ENCODE measurements at regions of chr9 and their contacts with region 1.

Region 1: GRCh38 chr9:135253305-135254004 is 166.0 kb downstream of the OLFM1 start:
- DNase-seq: peak; percentile 68

Region 2: DNA sequence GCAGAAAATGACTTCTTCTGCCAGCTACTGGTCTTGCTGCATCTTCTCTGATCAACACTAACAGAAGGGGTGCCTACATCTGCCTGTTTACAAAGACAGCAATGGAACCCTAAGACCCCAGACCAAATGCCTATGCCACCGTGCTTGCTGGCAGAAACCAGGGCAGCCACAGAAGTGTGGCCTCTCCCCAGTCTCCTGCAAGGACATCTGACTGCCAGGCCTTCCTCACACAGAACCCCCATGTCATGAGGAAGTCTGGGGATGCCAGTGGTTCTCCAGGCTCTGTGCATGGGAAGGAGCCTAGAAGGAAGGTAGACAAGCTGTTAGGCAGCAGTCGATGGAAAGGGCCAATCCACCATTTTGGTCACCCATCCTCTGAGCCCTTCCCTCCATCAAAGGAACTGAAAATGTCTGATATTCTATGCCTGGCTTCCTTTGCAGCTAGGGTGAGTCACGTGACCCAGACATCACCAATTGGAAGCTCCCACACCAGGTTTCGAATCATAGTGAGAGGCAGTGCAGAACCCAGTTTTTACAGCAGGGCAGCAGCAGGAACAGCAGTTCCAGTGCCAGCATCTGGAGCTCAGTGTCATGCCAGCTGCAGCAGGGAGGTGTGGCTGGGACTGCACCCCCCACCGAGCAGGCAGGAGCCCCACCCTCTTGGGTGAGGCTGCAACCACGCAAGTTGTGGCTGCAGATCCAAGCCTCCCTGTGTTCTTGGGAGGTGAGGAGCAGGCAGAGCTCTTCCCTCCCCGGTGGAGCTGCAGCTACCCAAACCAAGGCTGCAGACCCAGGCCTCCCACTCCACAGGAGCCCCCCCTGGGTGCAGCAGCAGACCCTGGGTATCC is 42.6 kb before region 1 on chr9:
- intact Hi-C with region 1: loop called in 1 of 2 experiments (anchors 1 kb)
- DNase-seq: peak; percentile 64

Measured in posterior vena cava (tissue), 2 donors.